ENCODE measurements at regions of chr1 and their contacts with region 1.

Region 1: GRCh38 chr1:119603695-119604094 is 44.4 kb downstream of the ZNF697 start:
- H3K4me3 ChIP-seq: no peak overlapping the region
- H3K27ac ChIP-seq: no peak overlapping the region
- H3K4me1 ChIP-seq: no peaks in the 10 kb centered on the region
- CTCF ChIP-seq: no peak

Region 2: GRCh38 chr1:119887428-119887827 is 283.7 kb after region 1 on chr1:
- CTCF ChIA-PET with region 1: interaction called, 11 read pairs
- POLR2A ChIA-PET with region 1: no interaction called
- H3K4me3 ChIP-seq: no peak overlapping the region
- H3K27ac ChIP-seq: no peak overlapping the region
- H3K4me1 ChIP-seq: no peaks in the 10 kb centered on the region
- CTCF ChIP-seq: no peak